Activated B cell treated with CpG ODN at 0.5 μM for 24 hours (primary cell): ENCODE measurements at regions of chr3 and their contacts with region 1.

Region 1: GRCh38 chr3:102229062-102229655 is 205.7 kb upstream of the ZPLD1 start:
- DNase-seq: peak; percentile 62
- ATAC-seq: peak; percentile 56
- H3K4me3 Mint-ChIP-seq: no peak overlapping the region
- H3K27ac Mint-ChIP-seq: no peak overlapping the region
- H3K4me1 Mint-ChIP-seq: peaks cover 54% of the 10 kb centered on the region
- H3K27me3 Mint-ChIP-seq: no peaks in the 10 kb centered on the region
- CTCF ChIP-seq: no peak

Region 2: GRCh38 chr3:101695779-101696372 is 533.3 kb before region 1 on chr3:
- CTCF ChIA-PET with region 1: interaction called, 9 read pairs
- POLR2A ChIA-PET with region 1: interaction called, 7 read pairs
- intact Hi-C with region 1: loop called (anchors 1 kb)
- DNase-seq: no peak
- ATAC-seq: no peak
- H3K4me3 Mint-ChIP-seq: no peak overlapping the region
- H3K27ac Mint-ChIP-seq: no peak overlapping the region
- H3K4me1 Mint-ChIP-seq: peaks cover 3% of the 10 kb centered on the region
- H3K27me3 Mint-ChIP-seq: no peaks in the 10 kb centered on the region
- CTCF ChIP-seq: peak; percentile 67

Region 3: GRCh38 chr3:101827211-101828174 is 401.7 kb before region 1 on chr3:
- CTCF ChIA-PET with region 1: interaction called, 27 read pairs
- POLR2A ChIA-PET with region 1: interaction called, 23 read pairs
- intact Hi-C with region 1: no loop called
- DNase-seq: peak; percentile 68
- ATAC-seq: peak; percentile 86
- H3K4me3 Mint-ChIP-seq: peak overlapping the region; percentile 87
- H3K27ac Mint-ChIP-seq: peak overlapping the region; percentile 98
- H3K4me1 Mint-ChIP-seq: peaks cover 66% of the 10 kb centered on the region
- H3K27me3 Mint-ChIP-seq: no peaks in the 10 kb centered on the region
- CTCF ChIP-seq: no peak

Region 4: DNA sequence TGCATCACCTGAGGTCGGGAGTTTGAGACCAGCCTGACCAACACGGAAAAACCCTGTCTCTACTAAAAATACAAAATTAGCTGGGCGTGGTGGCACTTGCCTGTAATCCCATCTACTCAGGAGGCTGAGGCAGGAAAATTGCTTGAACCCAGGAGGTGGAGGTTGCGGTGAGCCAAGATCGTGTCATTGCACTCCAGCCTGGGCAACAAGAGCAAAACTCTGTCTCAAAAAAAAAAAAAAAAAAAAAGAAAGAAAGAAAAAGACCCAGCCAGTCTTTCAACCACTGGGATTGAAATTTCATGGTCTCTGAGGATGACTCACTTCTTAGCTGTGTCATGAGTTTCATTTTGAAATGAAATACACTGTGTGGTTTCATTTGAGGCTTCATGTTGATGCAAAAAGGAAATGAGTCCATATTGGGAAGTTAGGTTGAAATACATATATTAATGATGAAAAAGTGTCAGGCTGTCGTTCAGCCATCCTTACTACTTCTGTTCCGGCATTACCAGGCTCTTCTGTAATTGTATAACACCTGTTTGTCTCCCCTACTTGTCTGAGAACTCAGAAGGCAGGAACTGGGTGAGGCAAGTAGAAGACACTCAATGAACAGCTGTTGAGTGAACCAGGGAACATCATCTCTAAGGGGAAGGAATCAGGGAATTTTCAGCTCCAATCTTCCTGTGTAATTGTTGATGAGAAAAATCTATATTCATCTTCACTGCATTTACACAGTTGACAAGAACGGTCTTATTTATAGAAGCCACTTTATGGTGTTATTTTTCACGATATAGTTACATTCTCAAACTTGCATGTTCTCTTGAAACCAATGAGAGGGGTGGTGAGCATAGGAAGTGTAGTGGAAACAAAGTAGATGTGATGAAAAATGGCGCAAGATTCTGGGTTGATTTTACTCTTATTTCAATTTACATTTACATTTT is 292.5 kb before region 1 on chr3:
- CTCF ChIA-PET with region 1: interaction called, 34 read pairs
- POLR2A ChIA-PET with region 1: interaction called, 19 read pairs
- intact Hi-C with region 1: loop called (anchors 1 kb)
- DNase-seq: no peak
- ATAC-seq: peak; percentile 78
- H3K4me3 Mint-ChIP-seq: peak overlapping the region; percentile 76
- H3K27ac Mint-ChIP-seq: peak overlapping the region; percentile 94
- H3K4me1 Mint-ChIP-seq: peaks cover 49% of the 10 kb centered on the region
- H3K27me3 Mint-ChIP-seq: no peaks in the 10 kb centered on the region
- CTCF ChIP-seq: no peak

Region 5: GRCh38 chr3:102057781-102058421 is 171.3 kb before region 1 on chr3:
- CTCF ChIA-PET with region 1: interaction called, 7 read pairs
- POLR2A ChIA-PET with region 1: interaction called, 3 read pairs
- intact Hi-C with region 1: loop called (anchors 2 kb)
- DNase-seq: no peak
- ATAC-seq: peak; percentile 75
- H3K4me3 Mint-ChIP-seq: peak overlapping the region; percentile 42
- H3K27ac Mint-ChIP-seq: peak overlapping the region; percentile 97
- H3K4me1 Mint-ChIP-seq: peaks cover 61% of the 10 kb centered on the region
- H3K27me3 Mint-ChIP-seq: no peaks in the 10 kb centered on the region
- CTCF ChIP-seq: no peak

Region 6: DNA sequence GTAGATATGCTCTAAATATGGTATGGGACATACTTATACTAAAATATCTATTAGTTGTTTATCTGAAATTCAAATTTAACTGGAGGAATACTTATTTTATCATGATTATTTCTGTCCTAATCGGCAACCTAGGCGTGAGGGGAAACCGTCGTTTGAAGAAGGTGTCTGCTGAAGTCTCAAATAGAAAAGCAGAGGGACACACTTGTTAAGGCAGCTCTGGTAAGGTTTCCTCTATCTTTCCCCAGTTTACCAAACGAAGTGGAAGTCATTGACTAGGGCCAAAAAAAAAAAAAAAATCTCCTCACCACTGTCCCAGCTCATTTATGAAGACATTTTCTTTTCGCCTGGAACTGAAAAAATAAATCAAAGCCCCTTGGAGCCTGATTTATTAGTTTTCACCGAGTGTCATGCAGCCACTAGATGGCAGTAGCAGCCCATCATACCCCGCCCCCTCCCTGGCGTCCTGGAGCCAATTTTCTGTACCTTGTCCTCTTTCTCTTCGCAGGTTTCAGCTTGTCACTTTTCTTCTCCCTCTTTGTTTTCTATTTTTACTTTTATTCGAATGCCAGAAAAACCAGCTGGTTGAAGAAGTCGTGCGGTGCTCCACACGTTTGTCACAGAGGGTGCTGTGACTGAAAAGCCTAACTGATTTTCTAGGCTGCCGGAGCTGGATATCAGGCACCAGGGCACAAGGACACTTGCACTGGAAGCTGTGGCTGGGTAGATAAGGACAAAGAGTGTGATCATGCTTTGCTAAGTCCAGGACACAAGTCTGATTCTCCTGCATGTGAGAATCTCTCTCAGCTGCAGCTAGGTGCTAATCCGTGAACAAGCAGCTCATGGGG is 444.3 kb after region 1 on chr3:
- CTCF ChIA-PET with region 1: interaction called, 16 read pairs
- POLR2A ChIA-PET with region 1: no interaction called
- intact Hi-C with region 1: loop called (anchors 2 kb)
- DNase-seq: peak; percentile 19
- ATAC-seq: no peak
- H3K4me3 Mint-ChIP-seq: no peak overlapping the region
- H3K27ac Mint-ChIP-seq: no peak overlapping the region
- H3K4me1 Mint-ChIP-seq: peaks cover 3% of the 10 kb centered on the region
- H3K27me3 Mint-ChIP-seq: peaks cover 12% of the 10 kb centered on the region
- CTCF ChIP-seq: peak; percentile 70

Region 7: DNA sequence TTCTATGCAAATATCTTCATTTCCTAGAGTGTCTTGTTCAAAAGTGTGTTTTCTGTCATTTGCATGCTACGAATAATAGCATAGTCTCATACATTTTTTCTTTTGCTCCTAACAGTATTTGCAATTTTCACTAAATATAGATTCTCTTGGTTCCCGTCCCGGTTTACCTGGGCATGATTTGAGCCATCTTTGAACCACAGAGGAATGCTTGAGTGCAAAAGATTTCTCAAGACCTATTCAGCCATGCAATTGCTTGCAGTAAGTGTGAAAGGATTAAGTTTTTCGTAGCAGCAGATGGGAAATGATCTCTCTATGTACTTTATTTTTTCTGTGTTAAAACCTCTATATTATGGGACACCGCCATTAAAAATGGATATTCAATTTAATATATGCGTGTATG is 938.7 kb after region 1 on chr3:
- CTCF ChIA-PET with region 1: no interaction called
- POLR2A ChIA-PET with region 1: no interaction called
- intact Hi-C with region 1: no loop called
- DNase-seq: no peak
- ATAC-seq: no peak
- H3K4me3 Mint-ChIP-seq: no peak overlapping the region
- H3K27ac Mint-ChIP-seq: no peak overlapping the region
- H3K4me1 Mint-ChIP-seq: no peaks in the 10 kb centered on the region
- H3K27me3 Mint-ChIP-seq: no peaks in the 10 kb centered on the region
- CTCF ChIP-seq: no peak